ENCODE measurements at regions of chr11 and their contacts with region 1.

Region 1: DNA sequence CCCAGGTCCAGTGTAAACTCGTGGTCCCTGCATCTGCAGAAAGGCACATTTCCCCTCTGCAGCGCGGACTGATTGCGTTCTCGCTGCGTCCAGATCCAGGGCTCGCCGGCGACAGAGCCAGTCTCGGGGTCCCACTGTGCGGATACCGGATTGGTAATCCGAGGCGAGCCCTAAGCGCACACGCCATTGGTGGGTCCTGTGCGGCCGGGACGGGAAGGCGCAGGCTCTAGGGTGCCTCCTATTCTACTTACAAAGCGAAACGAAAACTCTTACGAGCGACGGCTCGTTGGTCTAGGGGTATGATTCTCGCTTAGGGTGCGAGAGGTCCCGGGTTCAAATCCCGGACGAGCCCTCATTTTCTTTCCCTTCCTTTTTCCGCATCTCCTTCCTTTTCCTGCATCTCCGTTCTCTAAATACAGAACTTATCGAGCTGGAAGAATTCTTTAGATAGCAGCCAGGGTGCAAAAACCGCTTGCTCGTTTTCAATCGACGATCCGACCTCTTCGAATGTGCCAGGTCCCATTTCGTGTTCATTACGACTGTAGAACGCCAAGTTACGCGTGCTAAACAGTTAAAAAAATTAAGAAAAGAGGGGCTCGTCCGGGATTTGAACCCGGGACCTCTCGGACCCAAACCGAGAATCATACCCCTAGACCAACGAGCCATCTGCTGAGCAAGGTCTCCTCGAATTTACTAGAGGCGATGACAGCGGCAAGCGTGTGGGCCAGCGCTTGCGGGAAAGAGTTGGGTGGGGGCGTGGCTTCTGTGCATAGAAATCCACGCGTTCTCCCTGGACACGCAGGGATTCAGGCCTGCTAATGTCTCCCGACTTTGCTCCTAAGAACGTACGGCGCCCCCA is 29.2 kb upstream of the WNT11 start:
- DNase-seq: peak; percentile 95
- ATAC-seq: peak; percentile 80
- H3K4me3 ChIP-seq: peak overlapping the region; percentile 84 to 97 (median 93)
- H3K4me3 Mint-ChIP-seq: peak overlapping the region; percentile 91
- H3K27ac ChIP-seq: peak overlapping the region; percentile 58 to 69
- H3K27ac Mint-ChIP-seq: peak overlapping the region; percentile 98
- H3K4me1 ChIP-seq: peaks cover 10 to 33% of the 10 kb centered on the region in 2 donors
- H3K4me1 Mint-ChIP-seq: peaks cover 29% of the 10 kb centered on the region
- H3K27me3 ChIP-seq: peaks cover 0 to 3% (median 0%) of the 10 kb centered on the region in 4 experiments
- H3K27me3 Mint-ChIP-seq: no peaks in the 10 kb centered on the region
- CTCF ChIP-seq: no peak

Region 2: GRCh38 chr11:74492974-74493790 is 1742.3 kb before region 1 on chr11 and contains the start of gene LIPT2:
- CTCF ChIA-PET with region 1: no interaction called
- POLR2A ChIA-PET with region 1: no interaction called
- intact Hi-C with region 1: loop called (anchors 10 kb)
- DNase-seq: peak; percentile 98
- ATAC-seq: peak; percentile 94
- H3K4me3 ChIP-seq: peak within 1 kb of the TSS; percentile 32 to 79 (median 75)
- H3K4me3 Mint-ChIP-seq: peak within 1 kb of the TSS; percentile 90
- H3K27ac ChIP-seq: peak within 1 kb of the TSS; percentile 47 to 78
- H3K27ac Mint-ChIP-seq: peak within 1 kb of the TSS; percentile 94
- H3K4me1 ChIP-seq: peaks cover 7 to 14% of the 10 kb centered on the region in 2 donors
- H3K4me1 Mint-ChIP-seq: peaks cover 13% of the 10 kb centered on the region
- H3K27me3 ChIP-seq: no peaks in the 10 kb centered on the region
- H3K27me3 Mint-ChIP-seq: no peaks in the 10 kb centered on the region
- CTCF ChIP-seq: no peak
- total RNA-seq, gene LIPT2: 6.5 and 20.2 TPM in 2 replicates

Region 3: GRCh38 chr11:75399344-75400145 is 835.9 kb before region 1 on chr11 and contains the start of gene RPS3:
- CTCF ChIA-PET with region 1: no interaction called
- POLR2A ChIA-PET with region 1: no interaction called
- intact Hi-C with region 1: loop called (anchors 10 kb)
- DNase-seq: peak; percentile 94
- ATAC-seq: peak; percentile 94
- H3K4me3 ChIP-seq: peak within 1 kb of the TSS; percentile 71 to 96 (median 76)
- H3K4me3 Mint-ChIP-seq: peak within 1 kb of the TSS; percentile 88
- H3K27ac ChIP-seq: peak within 1 kb of the TSS; percentile 85 to 87
- H3K27ac Mint-ChIP-seq: peak within 1 kb of the TSS; percentile 95
- H3K4me1 ChIP-seq: peaks cover 20 to 29% of the 10 kb centered on the region in 2 donors
- H3K4me1 Mint-ChIP-seq: peaks cover 41% of the 10 kb centered on the region
- H3K27me3 ChIP-seq: no peaks in the 10 kb centered on the region
- H3K27me3 Mint-ChIP-seq: peaks cover 7% of the 10 kb centered on the region
- CTCF ChIP-seq: peak; percentile 29
- total RNA-seq, gene RPS3: 3,554 and 3,642 TPM in 2 replicates

Region 4: DNA sequence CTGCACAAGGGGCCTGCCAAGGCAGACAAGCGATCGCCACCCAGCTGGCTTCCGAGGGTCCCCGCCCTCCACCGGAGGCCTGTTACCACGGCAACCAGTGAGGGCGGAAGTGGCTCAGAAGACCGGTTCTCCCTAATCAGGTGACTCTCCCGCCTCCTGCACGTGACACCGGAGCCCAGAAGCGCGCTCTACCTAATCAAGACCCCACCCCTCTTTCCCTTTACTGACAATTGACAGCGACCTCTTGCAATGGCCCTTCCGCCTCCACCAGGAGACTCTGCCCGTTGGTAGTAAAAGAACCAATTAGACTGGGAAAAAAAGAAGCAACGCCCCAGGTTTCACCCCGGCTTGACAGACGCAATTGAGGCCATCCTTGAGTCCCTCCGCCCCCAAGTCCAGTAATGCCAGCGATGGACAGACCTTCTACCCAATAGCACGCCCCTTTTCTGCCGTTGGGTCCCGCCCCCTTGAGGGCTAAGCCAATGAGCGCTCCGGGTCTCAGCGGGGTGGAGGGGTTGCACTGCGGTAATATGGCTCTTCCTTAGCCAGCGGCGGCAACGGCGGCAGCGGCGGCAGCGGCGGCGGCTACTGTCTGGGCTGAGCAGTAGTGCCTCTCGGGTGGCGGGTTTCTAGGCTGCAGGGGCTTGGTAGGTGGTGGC is 420.6 kb before region 1 on chr11 and contains the start of gene UVRAG:
- CTCF ChIA-PET with region 1: no interaction called
- POLR2A ChIA-PET with region 1: no interaction called
- intact Hi-C with region 1: loop called (anchors 2 kb)
- DNase-seq: peak; percentile 100
- ATAC-seq: peak; percentile 84
- H3K4me3 ChIP-seq: peak within 1 kb of the TSS; percentile 80 to 98 (median 95)
- H3K4me3 Mint-ChIP-seq: no peak within 1 kb of the TSS
- H3K27ac ChIP-seq: peak within 1 kb of the TSS; percentile 93 to 97
- H3K27ac Mint-ChIP-seq: peak within 1 kb of the TSS; percentile 99
- H3K4me1 ChIP-seq: peaks cover 37 to 63% of the 10 kb centered on the region in 2 donors
- H3K4me1 Mint-ChIP-seq: peaks cover 48% of the 10 kb centered on the region
- H3K27me3 ChIP-seq: no peaks in the 10 kb centered on the region
- H3K27me3 Mint-ChIP-seq: no peaks in the 10 kb centered on the region
- CTCF ChIP-seq: no peak
- total RNA-seq, gene UVRAG: 94.1 and 115 TPM in 2 replicates

Region 5: DNA sequence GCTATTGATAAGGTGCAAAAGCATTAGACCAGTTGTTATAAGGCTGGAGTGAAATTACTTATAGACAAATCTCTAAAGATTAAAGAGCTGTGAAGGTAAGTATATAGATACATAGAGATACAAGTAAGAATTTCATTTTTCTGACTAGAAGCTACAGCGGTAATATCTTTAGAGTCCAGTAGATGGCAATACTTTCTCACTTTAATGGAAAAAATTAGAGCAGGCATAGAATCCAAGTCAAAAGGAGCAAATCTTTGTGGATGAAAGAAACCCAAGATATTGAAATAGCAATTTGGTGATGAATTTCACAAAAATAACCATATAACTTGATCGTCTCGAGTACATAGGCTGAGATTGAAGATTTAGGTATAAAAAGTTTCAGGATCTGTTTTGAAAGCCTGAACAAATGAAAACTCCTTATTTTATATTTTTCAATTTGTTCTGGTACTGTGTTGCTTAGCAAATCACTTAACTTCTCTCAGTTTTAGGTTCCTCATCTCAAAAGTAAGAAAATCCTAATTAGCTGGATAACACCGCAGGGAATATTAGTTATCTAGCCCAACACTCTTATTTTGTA is 338.5 kb before region 1 on chr11:
- CTCF ChIA-PET with region 1: no interaction called
- POLR2A ChIA-PET with region 1: no interaction called
- intact Hi-C with region 1: loop called (anchors 10 kb)
- DNase-seq: peak; percentile 52
- ATAC-seq: no peak
- H3K4me3 ChIP-seq: no peak overlapping the region
- H3K4me3 Mint-ChIP-seq: no peak overlapping the region
- H3K27ac ChIP-seq: peak overlapping the region in 1 of 2 donors; percentile 6
- H3K27ac Mint-ChIP-seq: no peak overlapping the region
- H3K4me1 ChIP-seq: peaks cover 19% of the 10 kb centered on the region in 2 donors
- H3K4me1 Mint-ChIP-seq: peaks cover 41% of the 10 kb centered on the region
- H3K27me3 ChIP-seq: no peaks in the 10 kb centered on the region
- H3K27me3 Mint-ChIP-seq: no peaks in the 10 kb centered on the region
- CTCF ChIP-seq: peak; percentile 87

Region 6: GRCh38 chr11:76380967-76381719 is 145.7 kb after region 1 on chr11 and contains the starts of genes GVQW3 and THAP12:
- CTCF ChIA-PET with region 1: interaction called, 3 read pairs
- POLR2A ChIA-PET with region 1: no interaction called
- intact Hi-C with region 1: loop called (anchors 1 kb)
- DNase-seq: peak; percentile 99
- ATAC-seq: peak; percentile 88
- H3K4me3 ChIP-seq: peak within 1 kb of the TSS; percentile 61 to 98 (median 73)
- H3K4me3 Mint-ChIP-seq: peak within 1 kb of the TSS; percentile 98
- H3K27ac ChIP-seq: peak within 1 kb of the TSS in 1 of 2 donors; percentile 82
- H3K27ac Mint-ChIP-seq: peak within 1 kb of the TSS; percentile 94
- H3K4me1 ChIP-seq: peaks cover 34 to 39% of the 10 kb centered on the region in 2 donors
- H3K4me1 Mint-ChIP-seq: peaks cover 74% of the 10 kb centered on the region
- H3K27me3 ChIP-seq: no peaks in the 10 kb centered on the region
- H3K27me3 Mint-ChIP-seq: no peaks in the 10 kb centered on the region
- CTCF ChIP-seq: no peak
- total RNA-seq, gene GVQW3: 8.2 TPM in 2 replicates
- total RNA-seq, gene THAP12: 52.9 and 55.6 TPM in 2 replicates

Region 7: DNA sequence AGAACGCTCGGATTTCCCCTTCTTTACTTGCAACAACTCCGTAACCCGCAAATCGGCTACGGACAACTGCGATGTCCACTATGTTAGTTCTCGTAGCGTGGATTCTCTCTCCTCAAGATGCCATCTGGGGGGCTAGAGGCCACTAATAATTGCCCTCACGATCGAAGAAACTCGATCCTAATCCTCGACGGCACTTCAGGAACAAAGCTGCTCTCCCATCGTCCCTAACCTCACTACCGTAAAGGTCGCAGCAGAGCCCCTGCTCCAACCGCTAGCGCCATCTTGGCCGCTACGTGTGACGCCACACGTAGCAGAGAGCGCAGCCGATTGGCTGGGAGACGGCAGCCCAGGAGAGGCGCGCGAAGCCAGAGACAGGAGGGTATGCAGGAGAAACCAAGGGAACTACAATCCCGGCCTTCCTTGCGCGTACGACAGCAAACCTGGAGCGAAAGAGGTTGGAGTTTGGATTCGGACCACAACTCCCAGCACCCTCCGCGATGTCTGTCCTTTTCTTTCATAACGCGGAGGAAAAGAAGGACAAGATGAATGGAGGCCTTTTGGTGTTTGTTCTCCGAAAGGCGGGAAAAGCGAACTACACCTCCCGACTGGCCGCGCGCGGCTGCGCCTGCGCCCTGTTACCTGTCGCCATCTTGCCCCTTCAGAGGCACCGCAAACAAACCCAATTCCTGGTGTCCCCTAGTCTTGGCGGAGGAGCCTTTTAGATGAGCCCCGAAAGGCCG is 209.1 kb after region 1 on chr11 and contains the start of gene EMSY:
- CTCF ChIA-PET with region 1: no interaction called
- POLR2A ChIA-PET with region 1: no interaction called
- intact Hi-C with region 1: loop called (anchors 1 kb)
- DNase-seq: peak; percentile 96
- ATAC-seq: peak; percentile 97
- H3K4me3 ChIP-seq: peak within 1 kb of the TSS; percentile 87 to 99 (median 97)
- H3K4me3 Mint-ChIP-seq: peak within 1 kb of the TSS; percentile 96
- H3K27ac ChIP-seq: peak within 1 kb of the TSS; percentile 80 to 86
- H3K27ac Mint-ChIP-seq: peak within 1 kb of the TSS; percentile 98
- H3K4me1 ChIP-seq: peaks cover 19 to 23% of the 10 kb centered on the region in 2 donors
- H3K4me1 Mint-ChIP-seq: peaks cover 35% of the 10 kb centered on the region
- H3K27me3 ChIP-seq: no peaks in the 10 kb centered on the region
- H3K27me3 Mint-ChIP-seq: no peaks in the 10 kb centered on the region
- CTCF ChIP-seq: no peak
- total RNA-seq, gene EMSY: 54.0 and 59.7 TPM in 2 replicates

Measured in B cell (primary cell).